ENCODE measurements at regions of chr13 and their contacts with region 1.

Region 1: DNA sequence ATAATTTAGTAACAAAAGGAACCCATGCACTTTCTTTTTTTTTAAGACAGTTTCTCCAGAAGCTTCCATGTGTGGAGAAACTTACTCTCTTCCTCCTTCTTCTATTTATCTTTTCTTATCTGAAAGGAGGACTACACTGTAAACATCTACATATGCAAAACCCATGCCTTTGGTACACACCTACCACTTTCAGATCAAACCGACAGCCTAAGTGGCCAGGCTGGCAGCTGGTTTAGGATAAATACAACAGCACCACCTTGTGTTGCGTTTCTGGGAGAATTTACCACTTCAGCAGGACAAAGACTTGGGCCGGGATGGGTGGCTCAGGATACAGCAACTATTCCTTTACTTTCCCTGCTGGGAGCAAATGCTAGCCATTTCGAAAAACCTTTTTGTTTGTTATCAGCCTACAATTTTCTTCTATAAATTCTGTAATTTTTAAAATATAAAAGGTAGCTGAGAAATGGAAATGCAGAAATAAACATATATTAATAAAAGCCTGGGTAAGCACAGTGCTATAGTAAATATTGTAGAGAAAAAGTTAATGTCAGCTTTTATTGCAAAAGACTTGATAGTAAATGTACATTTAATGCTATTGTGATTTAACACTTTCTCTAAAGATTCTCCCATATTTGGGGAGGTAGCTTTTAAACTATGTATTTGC is 94.0 kb upstream of the RFC3 start:
- DNase-seq: peak; percentile 86
- ATAC-seq: peak; percentile 83
- H3K4me3 ChIP-seq: no peak overlapping the region
- H3K27ac ChIP-seq: peak overlapping the region; percentile 78
- H3K4me1 ChIP-seq: peaks cover 40% of the 10 kb centered on the region
- H3K27me3 ChIP-seq: no peaks in the 10 kb centered on the region
- CTCF ChIP-seq: peak; percentile 65 to 85 (median 74); a peak in 5 of 6 replicates
- EP300 ChIP-seq: 0 out of 4 replicates have a peak, but pooled peaks of 1 of the 2 experiments have one; percentile 34
- POLR2A ChIP-seq: no peak
- RAD21 ChIP-seq: peak; percentile 97

Region 2: DNA sequence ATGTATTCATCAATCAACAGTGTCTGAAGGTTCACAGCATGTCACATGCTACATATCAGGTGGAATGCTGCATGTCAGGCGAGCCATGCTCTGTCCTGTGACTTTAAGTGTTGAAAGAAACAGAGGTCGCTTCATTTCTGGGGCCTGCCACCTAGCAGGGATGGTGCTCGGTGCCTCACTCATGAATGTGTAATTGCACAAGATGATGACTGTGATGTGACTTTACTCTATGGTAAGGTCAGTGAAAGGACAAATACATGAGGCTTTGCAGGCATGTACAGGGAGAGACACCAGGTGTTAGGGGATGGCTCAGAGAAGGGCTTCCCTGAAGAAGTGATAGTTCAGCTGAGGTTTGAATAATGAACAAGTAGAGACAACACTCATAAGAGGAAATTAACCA is 1625.6 kb before region 1 on chr13:
- CTCF ChIA-PET with region 1: no interaction called
- POLR2A ChIA-PET with region 1: no interaction called
- RAD21 ChIA-PET with region 1: no interaction called
- SMC1A ChIA-PET with region 1: no interaction called
- in situ Hi-C with region 1: no loop called
- intact Hi-C with region 1: no loop called
- DNase-seq: no peak
- ATAC-seq: no peak
- H3K4me3 ChIP-seq: no peak overlapping the region
- H3K27ac ChIP-seq: no peak overlapping the region
- H3K4me1 ChIP-seq: no peaks in the 10 kb centered on the region
- H3K27me3 ChIP-seq: no peaks in the 10 kb centered on the region
- CTCF ChIP-seq: no peak
- EP300 ChIP-seq: no peak
- POLR2A ChIP-seq: no peak
- RAD21 ChIP-seq: no peak

Region 3: GRCh38 chr13:33110713-33111413 is 613.0 kb before region 1 on chr13:
- CTCF ChIA-PET with region 1: interaction called, 10 read pairs
- POLR2A ChIA-PET with region 1: no interaction called
- RAD21 ChIA-PET with region 1: interaction called, 4 read pairs
- SMC1A ChIA-PET with region 1: interaction called, 4 read pairs
- in situ Hi-C with region 1: no loop called
- intact Hi-C with region 1: no loop called
- DNase-seq: no peak
- ATAC-seq: peak; percentile 63
- H3K4me3 ChIP-seq: no peak overlapping the region
- H3K27ac ChIP-seq: peak overlapping the region; percentile 91
- H3K4me1 ChIP-seq: peaks cover 54% of the 10 kb centered on the region
- H3K27me3 ChIP-seq: no peaks in the 10 kb centered on the region
- CTCF ChIP-seq: no peak
- EP300 ChIP-seq: peak; percentile 30 to 35; a peak in 2 of 4 replicates
- POLR2A ChIP-seq: 0 out of 2 replicates have a peak, but pooled peaks have one; percentile 17
- RAD21 ChIP-seq: peak; percentile 24; the same call in 1 of the 2 replicates

Region 4: GRCh38 chr13:33514362-33514761 is 209.5 kb before region 1 on chr13:
- CTCF ChIA-PET with region 1: interaction called, 30 read pairs
- POLR2A ChIA-PET with region 1: no interaction called
- RAD21 ChIA-PET with region 1: interaction called, 10 read pairs
- SMC1A ChIA-PET with region 1: interaction called, 10 read pairs
- in situ Hi-C with region 1: no loop called
- intact Hi-C with region 1: no loop called
- DNase-seq: no peak
- ATAC-seq: peak; percentile 75
- H3K4me3 ChIP-seq: no peak overlapping the region
- H3K27ac ChIP-seq: no peak overlapping the region
- H3K4me1 ChIP-seq: peaks cover 7% of the 10 kb centered on the region
- H3K27me3 ChIP-seq: no peaks in the 10 kb centered on the region
- CTCF ChIP-seq: peak in 1 of 3 experiments; percentile 27; a peak in 2 of 6 replicates
- EP300 ChIP-seq: no peak
- POLR2A ChIP-seq: no peak
- RAD21 ChIP-seq: peak; percentile 28; the same call in 1 of the 2 replicates

Region 5: GRCh38 chr13:33642374-33643068 is 81.4 kb before region 1 on chr13:
- CTCF ChIA-PET with region 1: interaction called, 3 read pairs
- POLR2A ChIA-PET with region 1: no interaction called
- RAD21 ChIA-PET with region 1: interaction called, 4 read pairs
- SMC1A ChIA-PET with region 1: interaction called, 12 read pairs
- in situ Hi-C with region 1: no loop called
- intact Hi-C with region 1: no loop called
- DNase-seq: no peak
- ATAC-seq: no peak
- H3K4me3 ChIP-seq: no peak overlapping the region
- H3K27ac ChIP-seq: no peak overlapping the region
- H3K4me1 ChIP-seq: peaks cover 12% of the 10 kb centered on the region; the same call in 1 of the 2 replicates
- H3K27me3 ChIP-seq: no peaks in the 10 kb centered on the region
- CTCF ChIP-seq: no peak
- EP300 ChIP-seq: no peak
- POLR2A ChIP-seq: no peak
- RAD21 ChIP-seq: no peak

Region 6: DNA sequence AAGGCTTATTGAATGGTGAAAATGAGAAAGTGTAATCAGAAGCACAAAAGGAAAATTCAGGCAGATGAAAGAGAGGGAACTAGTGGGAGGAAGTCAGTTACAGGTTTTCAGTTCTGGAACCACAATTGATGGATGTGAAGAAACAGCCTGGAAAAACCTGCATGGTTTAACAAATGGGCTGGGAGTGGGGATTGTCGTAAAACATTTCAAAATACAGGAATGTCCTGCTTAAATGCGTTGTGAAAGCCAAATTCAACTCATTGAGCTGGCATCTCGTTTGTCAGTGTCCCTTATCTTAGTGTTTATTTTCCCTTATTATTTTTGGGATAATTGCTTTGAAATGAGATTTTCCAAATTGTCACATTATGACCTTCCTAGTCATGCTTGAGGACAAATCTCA is 12.5 kb before region 1 on chr13:
- CTCF ChIA-PET with region 1: interaction called, 4 read pairs
- POLR2A ChIA-PET with region 1: no interaction called
- RAD21 ChIA-PET with region 1: interaction called, 4 read pairs
- SMC1A ChIA-PET with region 1: interaction called, 10 read pairs
- in situ Hi-C with region 1: no loop called
- intact Hi-C with region 1: no loop called
- DNase-seq: no peak
- ATAC-seq: no peak
- H3K4me3 ChIP-seq: no peak overlapping the region
- H3K27ac ChIP-seq: no peak overlapping the region
- H3K4me1 ChIP-seq: no peaks in the 10 kb centered on the region
- H3K27me3 ChIP-seq: no peaks in the 10 kb centered on the region
- CTCF ChIP-seq: no peak
- EP300 ChIP-seq: no peak
- POLR2A ChIP-seq: no peak
- RAD21 ChIP-seq: no peak

Region 7: DNA sequence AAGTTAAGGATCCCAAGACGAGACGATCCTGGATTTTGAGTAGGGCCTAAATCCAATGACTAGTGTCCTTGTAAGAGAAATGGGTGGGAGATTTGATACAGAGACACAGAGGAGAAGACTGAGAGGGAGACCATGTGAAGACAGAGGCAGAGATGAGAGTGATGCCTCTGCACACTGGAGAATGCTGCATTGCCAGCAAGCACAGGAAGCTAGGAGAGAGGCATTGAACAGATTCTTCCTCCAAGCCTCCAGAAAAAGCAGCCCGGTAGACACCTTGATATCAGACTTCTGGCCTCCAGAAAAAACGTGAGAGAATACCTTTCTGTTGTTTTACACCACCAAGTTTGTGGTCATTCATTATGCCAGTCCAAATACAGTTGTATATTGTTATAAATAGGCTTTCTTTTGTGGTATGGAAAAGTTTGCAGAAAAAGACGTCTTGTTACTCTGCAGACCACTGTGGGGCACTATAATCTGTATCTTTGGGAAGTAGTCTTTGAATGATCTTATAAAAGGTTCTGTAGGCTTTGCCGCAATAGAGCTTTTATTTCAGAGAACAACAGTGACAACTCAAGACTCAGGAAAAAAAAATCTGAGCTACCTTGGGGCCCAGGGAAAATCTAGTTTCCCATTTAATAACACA is 76.2 kb after region 1 on chr13:
- CTCF ChIA-PET with region 1: interaction called, 5 read pairs
- POLR2A ChIA-PET with region 1: no interaction called
- RAD21 ChIA-PET with region 1: interaction called, 6 read pairs
- SMC1A ChIA-PET with region 1: interaction called, 12 read pairs
- in situ Hi-C with region 1: no loop called
- intact Hi-C with region 1: no loop called
- DNase-seq: no peak
- ATAC-seq: peak; percentile 62
- H3K4me3 ChIP-seq: no peak overlapping the region
- H3K27ac ChIP-seq: no peak overlapping the region
- H3K4me1 ChIP-seq: peaks cover 8% of the 10 kb centered on the region
- H3K27me3 ChIP-seq: no peaks in the 10 kb centered on the region
- CTCF ChIP-seq: peak; percentile 17 to 48 (median 35); a peak in 4 of 6 replicates
- EP300 ChIP-seq: no peak
- POLR2A ChIP-seq: no peak
- RAD21 ChIP-seq: peak; percentile 51